Activated T-helper 2 cell treated with anti-CD3 and anti-CD28 coated beads, Interferon-gamma antibody, Interleukin-2, Interleukin-4, amounts not matched to agents 10 μg/mL and 5 μg/mL and 100 μg/mL, durations not matched to agents 14 hours and 24 hours and 36 hours (primary cell): ENCODE measurements at regions of chr2 and their contacts with region 1.

Region 1: GRCh38 chr2:7427293-7428060 is 510.3 kb downstream of the RNF144A start:
- DNase-seq: no peak
- H3K4me3 Mint-ChIP-seq: peak overlapping the region; percentile 49
- H3K27ac Mint-ChIP-seq: peak overlapping the region; percentile 78
- H3K4me1 Mint-ChIP-seq: peaks cover 45% of the 10 kb centered on the region
- H3K27me3 Mint-ChIP-seq: no peaks in the 10 kb centered on the region

Region 2: DNA sequence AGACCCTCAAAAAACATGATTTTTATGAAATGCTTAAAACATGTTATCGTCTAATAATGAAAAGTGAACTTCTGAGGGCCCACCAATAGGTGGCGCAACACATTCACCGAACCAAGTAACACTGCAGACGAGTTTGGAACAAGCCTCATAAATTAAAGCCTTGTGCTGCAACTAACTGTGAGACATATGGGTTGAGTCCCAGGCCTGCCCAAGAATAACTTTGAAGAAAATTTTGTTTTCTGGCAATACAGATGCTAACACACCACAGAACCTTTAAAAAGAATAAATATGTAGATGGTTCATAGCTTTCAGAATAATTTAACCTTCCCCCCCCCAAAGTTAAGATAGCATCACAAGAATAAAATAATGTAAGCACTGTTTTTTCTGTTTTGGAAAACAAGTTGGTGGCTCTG is 224.4 kb before region 1 on chr2:
- intact Hi-C with region 1: loop called (anchors 10 kb)
- DNase-seq: peak; percentile 48
- H3K4me3 Mint-ChIP-seq: no peak overlapping the region
- H3K27ac Mint-ChIP-seq: no peak overlapping the region
- H3K4me1 Mint-ChIP-seq: peaks cover 7% of the 10 kb centered on the region
- H3K27me3 Mint-ChIP-seq: peaks cover 2% of the 10 kb centered on the region

Region 3: DNA sequence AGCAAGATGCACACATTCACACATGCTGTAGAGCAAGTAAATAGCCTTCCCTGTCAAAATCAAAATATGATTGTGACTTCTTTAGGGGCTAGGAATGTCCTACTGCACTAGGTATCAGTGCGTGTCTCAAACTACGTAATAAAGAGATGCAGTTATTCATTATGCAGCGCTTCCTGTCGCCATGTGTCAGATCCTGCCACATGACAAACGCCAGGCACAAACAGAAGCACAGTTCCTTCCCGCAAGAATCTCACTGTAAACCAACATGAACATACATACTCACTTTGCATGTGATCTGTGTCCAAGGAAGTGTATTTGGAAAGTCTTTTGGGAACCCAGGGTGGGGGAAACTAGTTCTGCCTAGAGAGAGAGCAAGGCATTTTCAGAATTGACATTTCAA is 89.6 kb after region 1 on chr2:
- intact Hi-C with region 1: no loop called
- DNase-seq: no peak
- H3K4me3 Mint-ChIP-seq: peak overlapping the region; percentile 1
- H3K27ac Mint-ChIP-seq: peak overlapping the region; percentile 92
- H3K4me1 Mint-ChIP-seq: peaks cover 57% of the 10 kb centered on the region
- H3K27me3 Mint-ChIP-seq: no peaks in the 10 kb centered on the region

Region 4: GRCh38 chr2:8049851-8050571 is 622.5 kb after region 1 on chr2:
- intact Hi-C with region 1: loop called (anchors 5 kb)
- DNase-seq: peak; percentile 63
- H3K4me3 Mint-ChIP-seq: peak overlapping the region; percentile 30
- H3K27ac Mint-ChIP-seq: peak overlapping the region; percentile 86
- H3K4me1 Mint-ChIP-seq: peaks cover 53% of the 10 kb centered on the region
- H3K27me3 Mint-ChIP-seq: no peaks in the 10 kb centered on the region

Region 5: GRCh38 chr2:8152392-8153257 is 725.1 kb after region 1 on chr2:
- intact Hi-C with region 1: loop called (anchors 10 kb)
- DNase-seq: no peak
- H3K4me3 Mint-ChIP-seq: no peak overlapping the region
- H3K27ac Mint-ChIP-seq: no peak overlapping the region
- H3K4me1 Mint-ChIP-seq: peaks cover 42% of the 10 kb centered on the region
- H3K27me3 Mint-ChIP-seq: no peaks in the 10 kb centered on the region

Region 6: GRCh38 chr2:8234757-8235374 is 807.4 kb after region 1 on chr2:
- intact Hi-C with region 1: loop called (anchors 10 kb)
- DNase-seq: no peak
- H3K4me3 Mint-ChIP-seq: no peak overlapping the region
- H3K27ac Mint-ChIP-seq: no peak overlapping the region
- H3K4me1 Mint-ChIP-seq: peaks cover 34% of the 10 kb centered on the region
- H3K27me3 Mint-ChIP-seq: peaks cover 4% of the 10 kb centered on the region

Region 7: DNA sequence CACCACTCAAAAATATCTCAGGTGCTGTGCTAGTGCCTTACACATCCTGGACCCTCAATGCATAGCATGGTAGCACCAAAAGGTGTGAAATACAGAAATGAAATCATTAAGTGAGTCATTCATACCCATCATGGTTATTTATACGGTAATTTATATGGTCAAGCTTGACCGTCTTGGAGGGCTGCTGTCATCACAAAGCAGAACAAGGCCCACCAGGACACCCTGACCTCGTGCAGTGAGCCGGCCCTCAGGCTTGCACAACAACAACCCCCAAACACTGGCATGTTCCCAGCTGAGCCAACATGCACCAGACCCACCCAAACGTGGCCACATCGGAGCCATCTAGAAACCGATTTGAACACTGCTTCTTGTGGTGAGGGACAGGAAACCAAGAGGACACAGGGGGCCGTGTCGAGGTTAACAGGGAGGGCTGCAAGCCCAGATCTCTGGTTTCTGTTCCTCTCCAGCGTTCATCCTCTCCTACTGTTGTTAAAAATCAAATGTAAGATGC is 875.9 kb after region 1 on chr2:
- intact Hi-C with region 1: loop called (anchors 10 kb)
- DNase-seq: peak; percentile 82
- H3K4me3 Mint-ChIP-seq: peak overlapping the region; percentile 49
- H3K27ac Mint-ChIP-seq: peak overlapping the region; percentile 47
- H3K4me1 Mint-ChIP-seq: peaks cover 81% of the 10 kb centered on the region
- H3K27me3 Mint-ChIP-seq: no peaks in the 10 kb centered on the region

Region 8: GRCh38 chr2:8761529-8762164 is 1334.2 kb after region 1 on chr2:
- intact Hi-C with region 1: loop called (anchors 5 kb)
- DNase-seq: no peak
- H3K4me3 Mint-ChIP-seq: no peak overlapping the region
- H3K27ac Mint-ChIP-seq: no peak overlapping the region
- H3K4me1 Mint-ChIP-seq: peaks cover 3% of the 10 kb centered on the region
- H3K27me3 Mint-ChIP-seq: no peaks in the 10 kb centered on the region